ENCODE measurements at regions of chr3 and their contacts with region 1.

Region 1: GRCh38 chr3:9373465-9373864 is 10.6 kb downstream of the THUMPD3 start:
- DNase-seq: no peak
- ATAC-seq: no peak
- H3K4me3 ChIP-seq: no peak overlapping the region
- H3K27ac ChIP-seq: no peak overlapping the region
- H3K4me1 ChIP-seq: no peaks in the 10 kb centered on the region
- H3K27me3 ChIP-seq: no peaks in the 10 kb centered on the region
- CTCF ChIP-seq: no peak

Region 2: GRCh38 chr3:9316881-9317361 is 56.5 kb before region 1 on chr3:
- intact Hi-C with region 1: no loop called
- DNase-seq: no peak
- ATAC-seq: peak; percentile 61
- H3K4me3 ChIP-seq: peak overlapping the region; percentile 32
- H3K27ac ChIP-seq: peak overlapping the region; percentile 51
- H3K4me1 ChIP-seq: no peaks in the 10 kb centered on the region
- H3K27me3 ChIP-seq: no peaks in the 10 kb centered on the region
- CTCF ChIP-seq: no peak

Region 3: DNA sequence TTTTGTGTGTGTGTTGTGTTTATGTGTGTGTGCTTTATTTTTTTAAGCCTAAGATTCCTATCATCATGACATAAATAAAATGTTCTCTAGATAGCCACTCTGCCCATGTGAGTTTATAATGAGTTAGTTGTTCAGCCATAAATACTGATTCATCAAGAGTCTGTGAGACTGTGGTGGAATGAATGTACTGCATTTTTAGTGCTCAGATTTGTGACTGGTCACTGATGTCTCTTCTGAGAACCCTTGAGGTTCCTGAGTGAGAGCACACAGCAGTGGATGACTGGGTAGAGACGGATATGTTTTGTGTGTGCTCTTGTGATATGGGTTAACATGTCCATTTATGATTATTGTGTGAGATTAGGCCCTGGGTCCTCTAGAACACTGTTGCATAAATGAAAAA is 75.2 kb after region 1 on chr3:
- intact Hi-C with region 1: loop called (anchors 10 kb)
- DNase-seq: no peak
- ATAC-seq: no peak
- H3K4me3 ChIP-seq: no peak overlapping the region
- H3K27ac ChIP-seq: no peak overlapping the region
- H3K4me1 ChIP-seq: no peaks in the 10 kb centered on the region
- H3K27me3 ChIP-seq: no peaks in the 10 kb centered on the region
- CTCF ChIP-seq: no peak

Measured in upper lobe of right lung (tissue), 1 donor.